ENCODE measurements at regions of chr19 and their contacts with region 1.

Region 1: GRCh38 chr19:8069096-8069973 is 16.8 kb downstream of the CCL25 start:
- DNase-seq: peak; percentile 53 to 80
- H3K4me3 ChIP-seq: no peak overlapping the region
- H3K27ac ChIP-seq: no peak overlapping the region
- H3K4me1 ChIP-seq: no peaks in the 10 kb centered on the region
- H3K27me3 ChIP-seq: no peaks in the 10 kb centered on the region
- CTCF ChIP-seq: peak; percentile 59 to 93 (median 72)
- EP300 ChIP-seq: no peak
- POLR2A ChIP-seq: no peak
- RAD21 ChIP-seq: peak; percentile 82 to 83

Region 2: DNA sequence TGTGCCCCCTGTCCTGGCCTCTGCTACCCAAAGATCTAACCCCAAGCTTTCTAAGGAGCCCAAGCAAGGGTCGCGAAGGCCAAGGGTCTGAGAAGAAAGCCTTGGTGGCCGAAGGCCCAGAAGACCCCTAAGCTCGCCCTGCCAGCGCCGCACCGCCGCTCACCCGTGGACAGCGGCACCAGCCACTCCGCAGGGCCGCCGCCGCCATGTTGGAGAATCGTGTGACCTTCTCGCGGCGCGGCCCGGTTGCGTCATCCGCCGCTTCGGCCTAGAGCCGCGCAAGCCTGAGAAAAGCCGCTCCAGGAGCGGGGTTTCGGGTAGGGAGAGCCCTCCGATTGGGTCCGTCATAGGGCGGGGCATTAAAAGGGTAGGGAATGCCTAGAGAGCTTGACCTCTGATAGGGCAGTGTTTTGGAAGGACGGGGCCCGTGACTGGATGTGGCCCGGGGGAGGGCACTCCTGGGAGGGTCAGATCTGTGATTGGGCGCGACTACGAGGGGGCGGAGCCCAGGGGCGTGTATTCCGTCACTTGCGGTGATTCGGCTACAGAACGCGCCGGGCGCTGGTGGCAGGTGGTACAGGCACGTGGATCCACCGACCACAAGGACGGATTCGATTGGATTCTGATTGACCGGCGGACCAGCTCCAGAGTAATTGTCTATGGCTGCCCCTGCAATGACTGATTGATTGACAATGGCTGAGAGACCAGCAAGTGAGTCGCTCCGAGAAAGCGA is 125.7 kb before region 1 on chr19 and contains the start of gene TIMM44:
- CTCF ChIA-PET with region 1: interaction called, 26 read pairs
- POLR2A ChIA-PET with region 1: interaction called, 4 read pairs
- DNase-seq: peak; percentile 98
- H3K4me3 ChIP-seq: peak within 1 kb of the TSS; percentile 90 to 99 (median 97)
- H3K27ac ChIP-seq: peak within 1 kb of the TSS; percentile 94
- H3K4me1 ChIP-seq: peaks cover 0 to 3% (median 0%) of the 10 kb centered on the region in 4 experiments; a peak in 1 of 7 replicates
- H3K27me3 ChIP-seq: no peaks in the 10 kb centered on the region
- CTCF ChIP-seq: no peak
- EP300 ChIP-seq: no peak
- POLR2A ChIP-seq: peak; percentile 97 to 99
- RAD21 ChIP-seq: no peak
- total RNA-seq, gene TIMM44: 123 and 131 TPM in 2 replicates

Region 3: GRCh38 chr19:8005534-8006256 is 63.6 kb before region 1 on chr19 and contains the start of gene ELAVL1:
- CTCF ChIA-PET with region 1: interaction called, 12 read pairs
- POLR2A ChIA-PET with region 1: interaction called, 4 read pairs
- DNase-seq: peak; percentile 53 to 94
- H3K4me3 ChIP-seq: peak within 1 kb of the TSS; percentile 63 to 89 (median 85)
- H3K27ac ChIP-seq: peak within 1 kb of the TSS; percentile 93; the same call in 1 of the 2 replicates
- H3K4me1 ChIP-seq: peaks cover 6 to 13% (median 9%) of the 10 kb centered on the region in 4 experiments
- H3K27me3 ChIP-seq: no peaks in the 10 kb centered on the region
- CTCF ChIP-seq: no peak
- EP300 ChIP-seq: no peak
- POLR2A ChIP-seq: peak; percentile 80 to 87
- RAD21 ChIP-seq: no peak
- total RNA-seq, gene ELAVL1: 163 and 167 TPM in 2 replicates

Region 4: GRCh38 chr19:8028951-8029491 is 40.3 kb before region 1 on chr19:
- CTCF ChIA-PET with region 1: interaction called, 15 read pairs
- POLR2A ChIA-PET with region 1: interaction called, 3 read pairs
- DNase-seq: peak in 1 of 2 experiments; percentile 65
- H3K4me3 ChIP-seq: no peak overlapping the region
- H3K27ac ChIP-seq: no peak overlapping the region
- H3K4me1 ChIP-seq: peaks cover 4 to 17% (median 9%) of the 10 kb centered on the region in 4 experiments
- H3K27me3 ChIP-seq: no peaks in the 10 kb centered on the region
- CTCF ChIP-seq: peak; percentile 5 to 28 (median 9); a peak in 3 of 4 replicates
- EP300 ChIP-seq: 0 out of 3 replicates have a peak, but pooled peaks of 1 of the 2 experiments have one; percentile 47
- POLR2A ChIP-seq: no peak
- RAD21 ChIP-seq: peak in 1 of 2 experiments; percentile 37; a peak in 2 of 4 replicates

Region 5: GRCh38 chr19:8054169-8054568 is 15.2 kb before region 1 on chr19:
- CTCF ChIA-PET with region 1: interaction called, 39 read pairs
- POLR2A ChIA-PET with region 1: interaction called, 14 read pairs
- DNase-seq: no peak
- H3K4me3 ChIP-seq: no peak overlapping the region
- H3K27ac ChIP-seq: no peak overlapping the region
- H3K4me1 ChIP-seq: peaks cover 2 to 18% (median 7%) of the 10 kb centered on the region in 4 experiments; a peak in 6 of 7 replicates
- H3K27me3 ChIP-seq: peaks cover 0 to 5% (median 2%) of the 10 kb centered on the region in 4 experiments; a peak in 4 of 7 replicates
- CTCF ChIP-seq: no peak
- EP300 ChIP-seq: no peak
- POLR2A ChIP-seq: no peak
- RAD21 ChIP-seq: no peak

Measured in H1 (cell line).